HCT116 (cell line): ENCODE measurements at regions of chr6 and their contacts with region 1.

Region 1: GRCh38 chr6:134097114-134097707 is 44.8 kb upstream of the SLC2A12 start:
- DNase-seq: peak; percentile 67
- ATAC-seq: peak; percentile 78
- H3K4me3 ChIP-seq: no peak overlapping the region
- H3K27ac ChIP-seq: no peak overlapping the region
- H3K4me1 ChIP-seq: no peaks in the 10 kb centered on the region
- H3K27me3 ChIP-seq: no peaks in the 10 kb centered on the region
- CTCF ChIP-seq: peak; percentile 47 to 95 (median 76); a peak in 5 of 6 replicates
- POLR2A ChIP-seq: no peak
- RAD21 ChIP-seq: peak; percentile 95

Region 2: DNA sequence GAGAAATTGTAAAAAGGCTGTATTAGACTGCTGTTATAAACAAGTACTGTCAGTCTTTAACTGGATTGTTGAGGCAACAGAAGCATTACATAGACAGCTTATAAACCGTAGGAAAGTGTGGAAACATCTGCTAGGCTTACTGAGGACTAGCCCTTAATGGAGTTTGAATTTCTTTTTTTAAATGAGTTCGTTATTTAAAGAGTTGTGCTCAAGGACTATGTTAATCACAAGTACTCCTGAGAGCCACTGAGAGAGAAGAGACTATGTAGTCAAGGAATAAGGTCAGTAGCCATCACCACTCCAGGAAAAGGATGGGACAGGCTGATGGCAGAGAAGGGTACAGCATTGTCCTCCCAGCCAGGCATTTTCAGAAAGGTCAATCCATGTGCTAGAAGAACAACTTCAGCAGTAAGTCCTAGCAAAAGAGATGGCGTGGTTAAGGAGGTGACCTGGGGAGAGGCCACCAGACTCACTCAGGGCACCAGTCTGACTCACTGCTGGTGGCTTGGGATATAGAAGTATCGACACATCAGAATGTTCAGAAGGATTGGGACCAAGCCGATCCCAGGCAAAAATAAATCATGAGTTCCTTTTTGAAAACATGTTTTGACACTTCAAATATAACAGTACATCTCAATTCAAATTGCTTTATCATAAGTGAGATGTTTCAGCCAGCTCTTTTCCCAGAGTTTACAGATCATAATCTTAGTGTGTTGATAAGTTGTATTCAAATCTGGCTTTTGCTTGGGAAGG is 1276.4 kb before region 1 on chr6:
- CTCF ChIA-PET with region 1: interaction called, 3 read pairs
- POLR2A ChIA-PET with region 1: no interaction called
- RAD21 ChIA-PET with region 1: no interaction called
- intact Hi-C with region 1: loop called (anchors 10 kb)
- DNase-seq: no peak
- ATAC-seq: peak; percentile 44
- H3K4me3 ChIP-seq: no peak overlapping the region
- H3K27ac ChIP-seq: peak overlapping the region; percentile 44; the same call in 1 of the 2 replicates
- H3K4me1 ChIP-seq: peaks cover 0 to 54% of the 10 kb centered on the region in 2 experiments; a peak in 3 of 4 replicates
- H3K27me3 ChIP-seq: no peaks in the 10 kb centered on the region
- CTCF ChIP-seq: no peak
- POLR2A ChIP-seq: peak; percentile 17
- RAD21 ChIP-seq: no peak

Region 3: DNA sequence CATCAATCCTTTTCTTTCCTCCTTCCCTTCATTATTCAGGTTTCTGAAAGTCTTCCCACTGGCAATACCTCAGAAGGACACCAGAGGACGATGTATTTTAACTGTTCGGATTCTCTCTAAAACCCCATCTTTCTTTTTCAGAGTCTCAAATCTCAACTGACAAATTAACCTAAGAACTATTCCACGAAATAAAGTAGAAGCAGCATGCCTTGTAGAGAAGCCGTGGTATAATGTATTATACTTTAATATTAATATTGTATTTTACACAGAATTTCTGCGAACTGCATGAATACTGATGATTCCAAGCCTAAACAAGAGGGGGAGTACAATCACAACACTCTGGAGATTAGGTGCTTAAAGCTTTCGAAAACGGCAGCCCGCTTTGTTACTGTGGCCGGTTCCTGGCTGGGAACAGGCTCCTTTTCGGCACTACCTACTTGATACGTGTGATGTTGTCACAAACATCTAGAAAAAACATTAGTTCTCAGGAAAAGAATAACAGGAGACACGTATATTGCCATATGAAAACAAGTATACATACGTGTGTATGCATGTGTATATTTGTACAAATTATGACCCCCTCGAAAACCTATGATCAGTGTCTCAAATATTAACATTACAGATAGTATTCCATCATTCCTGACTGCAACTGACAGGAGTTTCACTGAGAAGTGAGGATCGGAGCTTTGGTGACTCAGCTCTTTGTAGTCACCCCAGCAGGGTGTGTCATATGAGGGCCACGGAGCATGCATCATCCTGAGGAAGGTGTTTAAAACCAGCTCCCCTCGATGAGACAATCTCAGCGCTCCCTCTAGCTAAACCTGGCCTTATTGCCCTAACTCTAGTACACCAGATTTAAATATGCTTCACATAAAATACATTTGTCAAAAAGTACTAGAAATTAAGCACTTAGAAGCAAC is 528.0 kb before region 1 on chr6:
- CTCF ChIA-PET with region 1: interaction called, 19 read pairs
- POLR2A ChIA-PET with region 1: no interaction called
- RAD21 ChIA-PET with region 1: no interaction called
- intact Hi-C with region 1: loop called (anchors 1 kb)
- DNase-seq: peak; percentile 87
- ATAC-seq: peak; percentile 97
- H3K4me3 ChIP-seq: peak overlapping the region; percentile 41 to 55
- H3K27ac ChIP-seq: peak overlapping the region; percentile 76
- H3K4me1 ChIP-seq: peaks cover 4 to 14% of the 10 kb centered on the region in 2 experiments
- H3K27me3 ChIP-seq: no peaks in the 10 kb centered on the region
- CTCF ChIP-seq: peak; percentile 90 to 98 (median 94)
- POLR2A ChIP-seq: no peak
- RAD21 ChIP-seq: peak; percentile 87

Region 4: GRCh38 chr6:133827766-133828165 is 269.4 kb before region 1 on chr6:
- CTCF ChIA-PET with region 1: no interaction called
- POLR2A ChIA-PET with region 1: no interaction called
- RAD21 ChIA-PET with region 1: no interaction called
- intact Hi-C with region 1: no loop called
- DNase-seq: no peak
- ATAC-seq: no peak
- H3K4me3 ChIP-seq: no peak overlapping the region
- H3K27ac ChIP-seq: no peak overlapping the region
- H3K4me1 ChIP-seq: no peaks in the 10 kb centered on the region
- H3K27me3 ChIP-seq: no peaks in the 10 kb centered on the region
- CTCF ChIP-seq: no peak
- POLR2A ChIP-seq: no peak
- RAD21 ChIP-seq: no peak

Region 5: DNA sequence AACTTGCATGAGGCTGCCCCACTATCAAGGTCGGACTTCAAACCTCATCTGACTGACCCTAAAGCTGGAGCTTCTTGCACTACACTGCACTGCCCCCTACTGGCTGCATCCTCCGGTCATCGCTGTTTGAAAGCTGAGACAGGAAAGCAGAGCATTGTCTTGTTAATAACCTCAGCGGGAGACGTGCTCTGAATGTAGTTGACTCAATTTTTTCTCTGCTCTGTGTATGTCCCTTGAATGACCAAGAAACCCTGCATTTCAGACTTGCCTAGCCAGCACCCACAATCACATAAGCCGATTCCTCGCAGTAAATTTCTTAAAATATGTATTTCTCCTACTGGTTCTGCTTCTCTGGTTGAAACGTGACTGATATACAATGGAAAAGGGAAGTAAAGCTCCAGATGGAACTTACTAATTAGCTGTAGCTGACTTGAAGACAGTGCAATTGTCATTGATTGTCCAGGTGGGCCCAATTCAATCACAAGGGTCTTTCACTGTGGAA is 180.5 kb before region 1 on chr6:
- CTCF ChIA-PET with region 1: interaction called, 510 read pairs
- POLR2A ChIA-PET with region 1: no interaction called
- RAD21 ChIA-PET with region 1: interaction called, 8 to 92 read pairs
- intact Hi-C with region 1: no loop called
- DNase-seq: peak; percentile 85
- ATAC-seq: peak; percentile 89
- H3K4me3 ChIP-seq: peak overlapping the region in 1 of 2 experiments; percentile 31; a peak in 1 of 4 replicates
- H3K27ac ChIP-seq: peak overlapping the region; percentile 41; the same call in 1 of the 2 replicates
- H3K4me1 ChIP-seq: peaks cover 8 to 12% of the 10 kb centered on the region in 2 experiments
- H3K27me3 ChIP-seq: no peaks in the 10 kb centered on the region
- CTCF ChIP-seq: peak; percentile 94 to 96 (median 96)
- POLR2A ChIP-seq: no peak
- RAD21 ChIP-seq: peak; percentile 97

Region 6: GRCh38 chr6:133957780-133958242 is 139.4 kb before region 1 on chr6:
- CTCF ChIA-PET with region 1: interaction called, 10 read pairs
- POLR2A ChIA-PET with region 1: no interaction called
- RAD21 ChIA-PET with region 1: no interaction called
- intact Hi-C with region 1: no loop called
- DNase-seq: no peak
- ATAC-seq: no peak
- H3K4me3 ChIP-seq: no peak overlapping the region
- H3K27ac ChIP-seq: no peak overlapping the region
- H3K4me1 ChIP-seq: peaks cover 0 to 7% of the 10 kb centered on the region in 2 experiments; a peak in 3 of 4 replicates
- H3K27me3 ChIP-seq: no peaks in the 10 kb centered on the region
- CTCF ChIP-seq: no peak
- POLR2A ChIP-seq: no peak
- RAD21 ChIP-seq: no peak

Region 7: DNA sequence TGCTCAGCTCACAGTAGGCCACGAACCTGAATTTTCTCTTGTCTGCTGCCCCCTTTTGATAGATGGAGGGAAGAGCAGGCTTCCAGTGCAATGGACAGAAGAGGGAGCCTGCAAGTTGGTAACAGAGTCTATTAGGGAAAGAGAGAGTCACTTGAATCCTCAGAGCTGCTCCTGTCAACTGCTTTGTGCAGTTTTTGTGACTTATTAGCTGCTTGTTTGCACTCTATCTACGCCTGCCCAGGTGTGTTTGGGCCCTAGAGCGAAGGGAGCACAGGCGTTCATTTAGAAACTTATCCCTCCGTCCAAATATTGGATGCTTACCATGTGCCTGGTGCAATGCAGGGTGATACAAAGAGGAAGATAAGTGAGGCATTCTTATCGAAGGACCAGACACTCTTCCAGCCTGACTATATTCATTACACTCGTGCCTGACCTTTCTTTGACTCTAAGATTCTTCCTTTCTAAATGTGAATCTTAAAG is 33.2 kb before region 1 on chr6:
- CTCF ChIA-PET with region 1: interaction called, 11 read pairs
- POLR2A ChIA-PET with region 1: no interaction called
- RAD21 ChIA-PET with region 1: no interaction called
- intact Hi-C with region 1: loop called (anchors 2 kb)
- DNase-seq: peak; percentile 59
- ATAC-seq: peak; percentile 88
- H3K4me3 ChIP-seq: no peak overlapping the region
- H3K27ac ChIP-seq: no peak overlapping the region
- H3K4me1 ChIP-seq: peaks cover 5 to 22% of the 10 kb centered on the region in 2 experiments; a peak in 2 of 4 replicates
- H3K27me3 ChIP-seq: no peaks in the 10 kb centered on the region
- CTCF ChIP-seq: peak; percentile 87 to 97 (median 88)
- POLR2A ChIP-seq: no peak
- RAD21 ChIP-seq: peak; percentile 89